GM12878 (cell line): ENCODE measurements at regions of chr17 and their contacts with region 1.

Region 1: DNA sequence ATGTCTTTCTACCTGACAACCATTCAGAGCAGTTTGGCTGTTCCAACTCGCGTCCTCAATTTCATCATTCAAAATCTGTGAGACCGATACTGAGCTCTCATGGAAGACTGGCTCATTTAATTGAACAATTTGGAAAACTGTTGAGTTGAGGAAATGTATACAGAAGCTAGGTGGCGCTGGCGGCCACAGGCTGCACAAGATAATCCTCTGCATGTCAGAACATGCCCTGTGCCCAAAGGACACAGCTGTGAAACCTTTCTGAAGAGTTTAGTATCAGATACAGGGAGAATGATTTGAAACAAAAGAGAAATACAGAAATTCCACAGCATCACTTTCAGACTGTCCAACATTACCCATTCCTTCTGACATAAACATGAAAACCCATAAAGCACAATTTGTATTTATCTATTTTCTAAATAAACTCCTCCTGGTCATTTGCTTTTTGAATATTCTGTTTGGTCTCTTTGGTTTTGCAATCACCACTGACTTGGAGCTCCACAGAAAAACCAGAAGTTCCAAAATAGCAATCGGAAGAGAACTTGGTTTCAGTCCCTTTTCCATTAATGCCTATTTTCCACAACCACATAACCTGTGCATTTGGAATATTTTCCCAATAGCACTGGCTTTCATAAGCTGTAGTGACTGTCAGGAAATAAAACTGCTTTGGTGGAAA is 192.8 kb downstream of the MAP2K6 start:
- DNase-seq: peak; percentile 45
- ATAC-seq: peak; percentile 96
- H3K4me3 ChIP-seq: no peak overlapping the region
- H3K27ac ChIP-seq: peak overlapping the region; percentile 50; the same call in 1 of the 2 replicates
- H3K4me1 ChIP-seq: peaks cover 2% of the 10 kb centered on the region; the same call in 1 of the 2 replicates
- H3K27me3 ChIP-seq: no peaks in the 10 kb centered on the region
- CTCF ChIP-seq: peak; percentile 75 to 86 (median 85)
- EP300 ChIP-seq: no peak
- POLR2A ChIP-seq: no peak
- RAD21 ChIP-seq: peak; percentile 82

Region 2: DNA sequence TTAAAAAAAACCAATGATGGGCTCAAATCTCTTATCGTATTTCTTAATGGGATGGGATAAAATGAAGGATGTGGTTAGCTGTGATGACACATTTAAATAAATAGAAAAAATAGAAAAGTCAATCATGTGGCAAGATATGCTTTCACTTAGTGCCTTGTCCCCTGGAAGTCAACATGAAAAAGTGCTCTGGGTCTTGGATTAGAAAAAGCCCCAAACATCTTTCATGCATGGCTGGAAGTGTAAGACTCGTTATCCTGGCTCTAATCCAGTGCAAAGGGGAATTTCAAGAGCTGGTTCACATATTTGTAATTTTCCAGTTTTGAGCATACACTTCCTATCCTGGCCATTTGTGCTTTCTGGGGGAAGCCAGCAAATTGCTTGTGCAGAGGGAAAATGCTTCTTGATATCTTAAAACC is 31.9 kb before region 1 on chr17:
- CTCF ChIA-PET with region 1: interaction called, 18 read pairs
- POLR2A ChIA-PET with region 1: no interaction called
- RAD21 ChIA-PET with region 1: interaction called, 16 read pairs
- SMC1A ChIA-PET with region 1: interaction called, 8 read pairs
- in situ Hi-C with region 1: no loop called
- intact Hi-C with region 1: no loop called
- DNase-seq: no peak
- ATAC-seq: no peak
- H3K4me3 ChIP-seq: no peak overlapping the region
- H3K27ac ChIP-seq: no peak overlapping the region
- H3K4me1 ChIP-seq: 0 out of 2 replicates have a peak, but pooled peaks cover 5% of the 10 kb centered on the region
- H3K27me3 ChIP-seq: peaks cover 0 to 6% of the 10 kb centered on the region in 2 experiments; a peak in 1 of 4 replicates
- CTCF ChIP-seq: no peak
- EP300 ChIP-seq: no peak
- POLR2A ChIP-seq: no peak
- RAD21 ChIP-seq: no peak

Region 3: DNA sequence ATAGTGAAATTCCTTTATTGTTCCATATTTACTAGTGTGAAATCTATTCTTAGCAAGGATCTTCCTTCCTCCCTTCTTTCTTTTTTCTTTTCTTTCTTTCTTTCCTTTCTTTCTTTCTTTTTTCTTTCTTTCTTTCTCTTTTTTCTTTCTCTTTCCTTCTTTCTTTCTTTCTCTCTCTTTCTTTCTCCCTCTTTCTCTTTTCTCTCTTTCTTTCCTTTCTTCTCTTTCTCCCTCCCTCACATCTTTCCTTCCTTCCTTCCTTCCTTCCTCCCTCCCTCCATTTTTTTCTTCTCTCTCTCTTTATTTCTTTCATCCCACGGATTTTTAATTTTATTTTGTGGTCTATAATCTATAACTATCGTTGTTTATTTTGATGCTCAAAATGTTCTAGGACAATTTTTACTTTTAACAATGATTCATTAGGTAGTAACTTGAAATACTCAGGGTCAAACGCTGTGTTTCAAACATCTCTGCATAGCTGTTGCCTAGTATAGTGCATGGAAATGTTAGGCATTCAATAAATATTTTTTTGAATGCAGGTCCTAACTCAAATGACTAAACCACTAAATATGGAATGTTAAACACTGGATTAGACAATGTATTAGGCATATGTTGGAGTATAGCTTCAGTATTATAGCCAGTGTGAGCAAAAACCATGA is 14.5 kb before region 1 on chr17:
- CTCF ChIA-PET with region 1: interaction called, 21 read pairs
- POLR2A ChIA-PET with region 1: no interaction called
- RAD21 ChIA-PET with region 1: interaction called, 5 read pairs
- SMC1A ChIA-PET with region 1: interaction called, 4 read pairs
- in situ Hi-C with region 1: no loop called
- intact Hi-C with region 1: no loop called
- DNase-seq: no peak
- ATAC-seq: no peak
- H3K4me3 ChIP-seq: no peak overlapping the region
- H3K27ac ChIP-seq: no peak overlapping the region
- H3K4me1 ChIP-seq: no peaks in the 10 kb centered on the region
- H3K27me3 ChIP-seq: peaks cover 0 to 2% of the 10 kb centered on the region in 2 experiments; a peak in 3 of 4 replicates
- CTCF ChIP-seq: no peak
- EP300 ChIP-seq: no peak
- POLR2A ChIP-seq: no peak
- RAD21 ChIP-seq: no peak

Region 4: DNA sequence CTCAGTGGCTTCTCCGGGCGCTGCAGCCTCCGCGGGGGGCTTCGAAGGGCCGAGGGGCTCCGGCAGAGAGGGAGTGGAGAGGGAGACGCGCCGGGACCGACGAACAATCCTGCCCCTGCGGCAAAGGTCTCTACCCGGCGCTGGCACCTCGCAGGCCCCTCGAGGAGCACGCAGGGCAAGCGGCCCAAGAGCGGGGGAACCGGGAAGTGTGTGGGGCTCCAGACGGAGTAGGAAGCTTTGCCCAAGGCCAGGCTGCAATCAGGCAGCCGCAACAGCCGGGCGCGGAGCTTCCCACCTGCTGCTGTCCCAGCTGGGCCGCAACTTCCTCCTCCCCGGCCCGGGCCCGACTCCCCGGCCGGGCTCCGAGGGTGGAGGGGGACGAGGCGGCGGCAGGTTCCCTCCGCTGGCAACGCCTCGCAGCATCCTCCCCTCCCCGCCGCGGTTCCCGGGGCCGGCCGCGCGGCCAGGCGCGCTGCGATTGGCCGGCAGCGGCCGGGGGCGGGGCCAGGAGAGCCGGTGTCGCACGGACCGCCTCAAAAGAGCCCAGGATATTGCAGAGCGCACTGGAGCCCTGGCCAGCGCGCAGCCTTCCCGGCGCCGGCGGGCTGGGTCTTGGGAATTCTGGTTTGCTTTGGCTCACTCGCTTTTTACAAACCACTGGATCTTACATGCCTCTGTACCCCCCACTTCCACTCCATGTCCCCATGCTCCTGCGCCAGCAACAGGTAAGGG is 561.8 kb after region 1 on chr17 and contains the start of gene KCNJ2:
- CTCF ChIA-PET with region 1: interaction called, 47 read pairs
- POLR2A ChIA-PET with region 1: no interaction called
- RAD21 ChIA-PET with region 1: interaction called, 19 read pairs
- SMC1A ChIA-PET with region 1: interaction called, 7 read pairs
- in situ Hi-C with region 1: no loop called
- intact Hi-C with region 1: no loop called
- DNase-seq: no peak
- ATAC-seq: peak; percentile 95
- H3K4me3 ChIP-seq: peak within 1 kb of the TSS; percentile 38
- H3K27ac ChIP-seq: no peak within 1 kb of the TSS
- H3K4me1 ChIP-seq: peaks cover 8% of the 10 kb centered on the region
- H3K27me3 ChIP-seq: peaks cover 0 to 10% of the 10 kb centered on the region in 2 experiments; a peak in 1 of 4 replicates
- CTCF ChIP-seq: no peak
- EP300 ChIP-seq: no peak
- POLR2A ChIP-seq: no peak
- RAD21 ChIP-seq: no peak
- polyA plus RNA-seq, gene KCNJ2: 1.6 to 3.0 TPM

Region 5: DNA sequence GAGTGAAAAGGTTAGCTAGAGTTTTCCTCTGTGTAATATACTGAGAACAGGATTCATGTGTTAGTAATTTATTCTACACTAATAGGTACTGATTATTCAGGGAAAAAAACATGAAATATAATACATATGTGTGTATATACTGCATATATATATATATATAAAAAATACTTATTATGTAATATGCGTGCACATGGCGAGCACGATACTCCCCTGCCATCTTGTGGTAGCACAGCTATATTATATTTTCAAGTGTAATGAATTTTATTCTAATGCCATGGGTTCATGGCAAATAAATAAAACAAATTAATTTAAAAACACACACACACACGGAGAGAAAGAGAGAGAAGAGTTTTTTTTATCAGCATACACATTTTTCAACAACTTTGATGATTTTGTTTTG is 1022.6 kb after region 1 on chr17:
- CTCF ChIA-PET with region 1: interaction called, 39 read pairs
- POLR2A ChIA-PET with region 1: no interaction called
- RAD21 ChIA-PET with region 1: no interaction called
- SMC1A ChIA-PET with region 1: interaction called, 3 read pairs
- in situ Hi-C with region 1: no loop called
- intact Hi-C with region 1: no loop called
- DNase-seq: no peak
- ATAC-seq: no peak
- H3K4me3 ChIP-seq: no peak overlapping the region
- H3K27ac ChIP-seq: no peak overlapping the region
- H3K4me1 ChIP-seq: no peaks in the 10 kb centered on the region
- H3K27me3 ChIP-seq: no peaks in the 10 kb centered on the region
- CTCF ChIP-seq: peak in 1 of 3 experiments; percentile 22; a peak in 1 of 6 replicates
- EP300 ChIP-seq: no peak
- POLR2A ChIP-seq: no peak
- RAD21 ChIP-seq: peak; percentile 65